ENCODE measurements at regions of chr3 and their contacts with region 1.

Region 1: DNA sequence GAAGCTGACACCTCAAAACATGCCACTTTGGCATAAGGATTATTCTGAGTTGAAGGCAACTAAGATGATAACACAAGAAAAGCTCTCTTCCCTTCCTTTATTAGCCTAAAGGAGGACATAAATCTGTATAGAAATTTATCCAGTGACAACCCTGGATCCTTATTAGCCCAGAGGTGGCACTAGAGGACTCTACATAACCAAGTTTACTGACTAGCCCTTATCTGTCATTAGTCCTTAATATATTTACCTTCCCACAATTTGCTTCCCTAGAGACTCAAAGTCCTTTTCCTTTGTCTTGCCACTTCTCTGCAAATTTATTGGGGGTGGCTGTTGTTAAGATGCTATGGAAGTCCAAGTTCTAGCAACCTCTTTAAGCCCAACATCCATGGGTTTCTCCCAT is 26.7 kb downstream of the CEP70 start:
- DNase-seq: no peak
- H3K4me3 ChIP-seq: no peak overlapping the region
- H3K27ac ChIP-seq: no peak overlapping the region
- H3K4me1 ChIP-seq: no peaks in the 10 kb centered on the region
- H3K27me3 ChIP-seq: no peaks in the 10 kb centered on the region
- CTCF ChIP-seq: no peak

Region 2: DNA sequence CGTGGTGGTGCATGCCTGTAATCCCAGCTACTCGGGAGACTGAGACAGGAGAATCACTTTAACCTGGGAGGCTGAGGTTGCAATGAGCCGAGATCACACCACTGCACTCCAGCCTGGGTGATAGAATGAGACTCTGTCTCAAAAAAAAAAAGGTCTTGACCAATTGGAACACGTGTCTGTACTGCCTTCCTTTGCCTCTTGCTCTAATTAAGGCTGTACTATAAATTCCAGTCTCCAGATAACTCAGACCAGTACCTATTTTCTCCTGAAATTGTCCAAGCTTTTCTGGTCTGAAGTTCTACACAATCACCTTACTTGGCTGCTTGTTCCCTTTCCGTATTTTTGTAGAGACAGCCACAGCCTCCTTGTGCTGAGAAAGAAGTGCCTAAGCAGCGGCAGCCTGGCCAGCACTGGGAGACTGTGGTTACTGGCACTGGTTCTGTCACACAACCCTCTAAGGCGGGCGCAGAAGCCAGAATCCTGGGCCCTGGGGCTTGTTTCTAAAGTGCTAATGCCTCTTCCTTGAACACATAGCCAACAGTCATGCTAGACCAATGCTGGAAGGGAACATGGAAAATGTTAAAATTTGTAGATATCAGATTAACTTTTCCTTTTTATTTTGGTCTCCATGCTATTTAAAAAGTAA is 32.8 kb after region 1 on chr3:
- CTCF ChIA-PET with region 1: no interaction called
- POLR2A ChIA-PET with region 1: interaction called, 16 read pairs
- intact Hi-C with region 1: no loop called
- DNase-seq: no peak
- H3K4me3 ChIP-seq: no peak overlapping the region
- H3K27ac ChIP-seq: no peak overlapping the region
- H3K4me1 ChIP-seq: no peaks in the 10 kb centered on the region
- H3K27me3 ChIP-seq: no peaks in the 10 kb centered on the region
- CTCF ChIP-seq: no peak

Region 3: DNA sequence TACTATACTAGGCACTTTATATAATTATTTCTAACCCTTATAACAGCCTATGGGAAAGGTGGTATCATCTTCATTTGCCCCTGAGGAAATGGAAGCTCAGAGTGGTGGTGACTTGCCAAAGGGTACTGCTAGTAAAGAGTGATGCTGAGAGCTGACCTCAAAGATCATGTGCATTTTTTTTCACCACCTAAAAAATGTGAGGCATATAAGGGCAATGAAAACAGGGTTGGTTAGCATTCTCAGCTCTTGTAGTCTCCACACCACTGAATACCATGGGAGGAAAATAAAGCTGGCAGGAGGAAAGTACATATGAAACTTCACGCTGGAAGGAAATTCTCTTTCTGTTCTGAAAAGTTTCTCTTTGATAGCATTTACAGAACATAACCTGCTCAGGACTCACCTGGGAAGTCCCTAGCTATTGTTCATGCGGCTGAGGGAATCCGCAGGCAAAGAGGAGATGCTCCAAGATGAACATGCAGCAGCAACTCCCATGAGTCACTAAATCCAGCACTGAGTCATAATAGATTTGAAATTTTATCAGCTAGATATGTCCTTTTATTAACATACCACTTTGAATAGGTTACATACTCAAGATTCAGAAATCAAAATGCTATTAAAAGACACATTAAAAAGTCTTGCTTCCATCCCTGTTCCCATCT is 58.4 kb after region 1 on chr3:
- CTCF ChIA-PET with region 1: no interaction called
- POLR2A ChIA-PET with region 1: no interaction called
- intact Hi-C with region 1: no loop called
- DNase-seq: peak; percentile 45 to 50
- H3K4me3 ChIP-seq: no peak overlapping the region
- H3K27ac ChIP-seq: no peak overlapping the region
- H3K4me1 ChIP-seq: no peaks in the 10 kb centered on the region
- H3K27me3 ChIP-seq: no peaks in the 10 kb centered on the region
- CTCF ChIP-seq: no peak

Region 4: DNA sequence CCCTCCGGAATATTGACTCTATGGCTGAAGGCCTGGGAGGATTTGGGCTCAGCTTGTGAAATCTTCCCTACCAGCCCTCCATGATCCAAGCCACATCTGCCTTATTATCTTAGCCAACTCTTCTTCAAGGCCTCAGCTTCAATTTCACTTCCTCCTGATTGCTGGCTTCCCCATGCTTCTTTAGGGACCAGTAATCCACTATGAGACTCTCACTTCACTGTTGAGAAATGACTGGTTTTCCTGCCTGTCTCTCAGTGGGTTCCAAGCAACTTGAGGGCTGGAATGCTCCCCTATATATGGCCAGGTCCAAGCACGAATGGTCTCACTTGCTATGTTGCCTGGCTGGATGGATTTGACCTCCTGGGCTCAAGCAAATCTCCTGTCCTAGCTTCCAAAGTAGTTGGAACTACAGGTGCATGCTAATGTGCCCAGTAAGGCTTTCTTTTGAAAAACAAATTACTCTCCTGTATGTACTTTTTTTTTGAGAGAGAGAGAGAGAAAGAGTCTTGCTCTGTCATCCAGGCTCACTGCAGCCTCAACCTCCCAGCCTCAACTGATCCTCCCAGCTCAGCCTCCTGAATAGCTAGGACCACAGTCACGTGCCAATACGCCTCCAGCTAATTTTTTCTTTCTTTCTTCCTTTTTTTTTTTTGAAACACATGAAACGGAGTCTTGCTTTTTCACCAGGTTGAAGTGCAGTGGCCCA is 275.2 kb after region 1 on chr3:
- CTCF ChIA-PET with region 1: no interaction called
- POLR2A ChIA-PET with region 1: no interaction called
- intact Hi-C with region 1: no loop called
- DNase-seq: no peak
- H3K4me3 ChIP-seq: no peak overlapping the region
- H3K27ac ChIP-seq: no peak overlapping the region
- H3K4me1 ChIP-seq: 0 out of 2 replicates have a peak, but pooled peaks cover 8% of the 10 kb centered on the region
- H3K27me3 ChIP-seq: no peaks in the 10 kb centered on the region
- CTCF ChIP-seq: no peak